PC-3 (cell line): ENCODE measurements at regions of chr10 and their contacts with region 1.

Region 1: DNA sequence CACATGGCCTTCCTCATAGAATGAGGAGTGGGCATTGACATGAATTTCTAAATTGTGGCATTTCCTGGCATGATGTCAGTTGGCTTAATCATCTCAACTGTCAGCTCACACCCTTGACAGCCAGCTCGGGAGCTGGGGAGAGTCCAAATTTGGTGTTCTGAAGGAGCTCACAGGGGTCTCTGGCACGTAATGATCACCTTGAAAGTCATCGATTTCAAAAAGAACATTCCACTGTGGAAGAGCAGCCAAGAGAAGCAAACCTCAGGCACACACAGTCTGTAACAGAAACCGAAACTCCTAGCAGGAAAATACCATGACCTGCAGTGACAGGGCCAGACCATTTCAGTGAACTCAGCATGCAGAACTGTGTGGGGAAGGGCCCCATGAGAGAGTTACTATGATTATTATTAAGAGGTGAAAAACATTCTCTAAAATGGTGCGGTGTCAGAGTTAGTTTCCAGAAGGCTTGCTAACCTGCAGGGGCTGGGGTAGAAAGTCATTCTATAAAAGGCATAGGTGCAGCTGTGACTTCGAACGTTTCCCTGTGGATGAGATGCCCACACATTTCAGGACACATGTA is 26.4 kb upstream of the KLF6 start:
- DNase-seq: peak; percentile 50
- ATAC-seq: no peak
- H3K4me3 ChIP-seq: no peak overlapping the region
- H3K27ac ChIP-seq: peak overlapping the region; percentile 100
- H3K4me1 ChIP-seq: peaks cover 60% of the 10 kb centered on the region
- H3K27me3 ChIP-seq: no peaks in the 10 kb centered on the region
- CTCF ChIP-seq: no peak

Region 2: DNA sequence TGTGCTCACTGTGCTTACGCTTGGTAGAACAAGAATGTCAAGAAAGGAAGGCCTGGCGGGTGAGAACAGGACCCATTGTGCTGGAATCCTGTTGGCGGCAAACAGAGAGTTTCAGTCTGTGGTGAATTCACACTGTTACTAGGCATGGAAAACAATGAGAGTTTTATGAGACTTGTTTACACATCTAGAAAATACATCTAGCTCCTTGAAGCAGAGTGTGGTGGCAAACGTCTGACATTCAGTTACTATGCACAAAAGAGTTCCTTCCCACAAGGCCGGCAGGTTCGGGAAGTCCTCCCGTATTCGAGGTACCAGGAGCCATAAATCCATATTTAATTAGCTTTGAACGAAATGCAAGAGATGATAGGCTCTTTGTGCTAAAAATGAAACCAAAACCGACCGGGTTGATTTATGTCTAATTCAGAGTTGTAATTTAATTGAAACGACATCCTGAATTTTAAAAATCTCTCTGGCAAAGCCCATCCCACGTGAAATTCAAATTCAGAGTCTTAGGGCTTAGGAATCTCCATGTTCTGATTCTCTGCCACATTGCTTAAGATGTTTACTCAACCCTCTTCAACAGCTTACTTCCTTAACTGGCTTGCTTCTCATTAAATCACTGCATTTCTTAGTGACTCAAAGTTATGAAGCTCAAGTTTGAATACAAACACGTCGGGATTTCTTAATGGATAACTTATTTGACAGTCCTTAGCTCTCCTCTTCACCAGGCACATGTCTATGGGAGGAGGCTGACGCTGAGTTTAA is 338.9 kb before region 1 on chr10:
- CTCF ChIA-PET with region 1: no interaction called
- POLR2A ChIA-PET with region 1: interaction called, 12 read pairs
- intact Hi-C with region 1: no loop called
- DNase-seq: peak; percentile 27
- ATAC-seq: no peak; the same call in 1 of the 2 replicates
- H3K4me3 ChIP-seq: peak overlapping the region; percentile 24
- H3K27ac ChIP-seq: peak overlapping the region; percentile 63
- H3K4me1 ChIP-seq: peaks cover 43% of the 10 kb centered on the region
- H3K27me3 ChIP-seq: no peaks in the 10 kb centered on the region
- CTCF ChIP-seq: no peak

Region 3: GRCh38 chr10:3828404-3829155 is 17.2 kb after region 1 on chr10:
- CTCF ChIA-PET with region 1: no interaction called
- POLR2A ChIA-PET with region 1: interaction called, 6 read pairs
- intact Hi-C with region 1: loop called (anchors 2 kb)
- DNase-seq: peak; percentile 31
- ATAC-seq: peak; percentile 20; the same call in 1 of the 2 replicates
- H3K4me3 ChIP-seq: peak overlapping the region; percentile 71
- H3K27ac ChIP-seq: peak overlapping the region; percentile 37
- H3K4me1 ChIP-seq: peaks cover 13% of the 10 kb centered on the region; the same call in 1 of the 2 replicates
- H3K27me3 ChIP-seq: no peaks in the 10 kb centered on the region
- CTCF ChIP-seq: no peak

Region 4: GRCh38 chr10:3954615-3955014 is 143.2 kb after region 1 on chr10:
- CTCF ChIA-PET with region 1: no interaction called
- POLR2A ChIA-PET with region 1: interaction called, 15 read pairs
- intact Hi-C with region 1: no loop called
- DNase-seq: no peak
- ATAC-seq: no peak
- H3K4me3 ChIP-seq: no peak overlapping the region
- H3K27ac ChIP-seq: no peak overlapping the region
- H3K4me1 ChIP-seq: no peaks in the 10 kb centered on the region
- H3K27me3 ChIP-seq: no peaks in the 10 kb centered on the region
- CTCF ChIP-seq: no peak

Region 5: DNA sequence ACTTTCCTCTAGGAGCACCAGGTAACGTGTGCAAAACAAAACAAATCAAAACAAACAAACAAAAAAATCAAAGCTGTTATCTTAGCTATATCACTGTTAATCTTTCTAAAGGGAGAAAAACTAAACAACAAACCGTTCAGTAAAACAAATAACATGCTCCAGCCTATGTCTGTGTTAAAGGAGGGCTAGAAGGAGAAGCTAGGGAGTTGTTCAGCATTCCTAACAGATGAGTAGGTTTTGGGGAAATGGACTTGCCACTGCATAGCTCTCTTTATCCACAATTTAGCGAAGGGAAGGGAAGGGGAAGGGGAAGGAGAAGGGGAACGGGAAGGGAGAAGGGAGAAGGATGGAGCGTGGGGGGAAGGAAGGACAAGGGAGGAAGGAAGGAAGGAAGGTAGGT is 880.4 kb after region 1 on chr10:
- CTCF ChIA-PET with region 1: no interaction called
- POLR2A ChIA-PET with region 1: interaction called, 14 read pairs
- intact Hi-C with region 1: no loop called
- DNase-seq: peak; percentile 71
- ATAC-seq: peak; percentile 82
- H3K4me3 ChIP-seq: no peak overlapping the region
- H3K27ac ChIP-seq: peak overlapping the region; percentile 100
- H3K4me1 ChIP-seq: peaks cover 38% of the 10 kb centered on the region
- H3K27me3 ChIP-seq: no peaks in the 10 kb centered on the region
- CTCF ChIP-seq: no peak